ENCODE measurements at regions of chr7 and their contacts with region 1.

Region 1: GRCh38 chr7:19595769-19596168 is 113.1 kb downstream of the POLR1F start:
- DNase-seq: no peak

Region 2: GRCh38 chr7:20834656-20835055 is 1238.9 kb after region 1 on chr7:
- intact Hi-C with region 1: loop called in 1 of 2 experiments (anchors 10 kb)
- DNase-seq: no peak